ENCODE measurements at regions of chr13 and their contacts with region 1.

Region 1: DNA sequence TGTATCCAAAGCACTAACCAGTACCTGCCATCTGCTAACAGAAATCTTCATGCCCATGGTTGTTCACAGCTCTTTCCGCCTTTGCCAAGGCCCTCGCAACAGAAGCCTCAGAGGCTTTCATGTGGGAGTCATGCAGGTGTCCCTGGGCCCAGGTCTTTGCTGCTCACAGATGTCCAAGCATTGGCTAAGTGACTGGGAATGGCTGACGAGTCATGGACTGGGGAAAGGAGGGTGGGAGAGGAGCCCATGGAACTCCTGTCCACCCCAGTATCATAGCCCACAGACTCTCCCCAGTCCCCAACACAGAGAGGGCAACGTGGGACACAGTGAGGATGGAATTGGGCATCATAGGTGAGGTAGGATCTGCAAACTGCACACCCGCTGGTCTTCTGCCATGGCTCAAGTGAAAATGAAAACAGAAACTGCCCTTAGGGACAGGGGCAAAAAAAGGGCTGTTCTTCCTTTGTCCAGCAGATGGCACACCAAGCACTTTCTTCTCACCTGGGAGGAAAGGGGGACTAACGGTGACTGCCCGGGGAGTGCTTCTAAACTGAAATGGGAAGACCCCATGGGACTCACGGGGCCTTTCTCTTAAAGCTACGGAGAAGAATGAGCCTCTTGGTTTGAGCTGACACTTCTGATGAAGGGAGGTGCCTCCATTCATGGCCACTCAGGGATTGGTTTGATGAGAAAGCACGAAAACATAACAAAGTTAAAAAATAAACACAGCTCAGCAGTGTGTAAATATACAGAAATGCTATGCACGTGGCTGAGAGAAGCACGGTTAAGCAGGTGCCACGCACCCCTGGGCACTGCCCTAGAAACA is 11.1 kb upstream of the DHRS12 start:
- DNase-seq: no peak
- ATAC-seq: peak; percentile 80
- H3K4me3 ChIP-seq: peak overlapping the region; percentile 24; the same call in 1 of the 2 replicates
- H3K27ac ChIP-seq: peak overlapping the region; percentile 28
- H3K4me1 ChIP-seq: peaks cover 32% of the 10 kb centered on the region
- H3K27me3 ChIP-seq: no peaks in the 10 kb centered on the region
- CTCF ChIP-seq: peak; percentile 83 to 97 (median 90)
- EP300 ChIP-seq: no peak
- POLR2A ChIP-seq: no peak
- RAD21 ChIP-seq: peak; percentile 88

Region 2: DNA sequence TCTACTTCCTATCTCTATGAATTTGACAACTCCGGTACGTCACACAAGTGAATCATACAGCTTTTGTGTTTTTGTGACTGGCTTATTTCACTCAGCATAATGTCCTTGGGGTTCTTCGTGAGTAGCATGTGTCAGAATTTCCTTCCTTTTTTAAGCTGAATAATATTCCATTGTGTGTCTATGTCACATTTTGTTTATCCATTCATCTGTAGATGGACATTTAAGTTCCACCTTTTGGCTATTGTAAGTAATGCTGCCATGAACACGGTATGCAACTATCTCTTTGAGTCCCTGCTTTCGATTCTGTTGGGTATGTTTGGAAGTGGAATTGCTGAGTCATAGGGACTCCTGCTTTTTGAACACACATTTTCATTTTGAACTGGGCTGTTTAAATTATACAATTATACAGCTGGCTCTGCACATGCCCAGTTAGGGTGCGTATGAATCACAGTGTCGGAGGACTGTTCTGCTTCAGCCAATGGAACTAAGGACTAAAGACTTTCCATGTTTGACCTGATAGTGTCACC is 660.9 kb before region 1 on chr13:
- CTCF ChIA-PET with region 1: no interaction called
- POLR2A ChIA-PET with region 1: no interaction called
- RAD21 ChIA-PET with region 1: no interaction called
- SMC1A ChIA-PET with region 1: no interaction called
- in situ Hi-C with region 1: no loop called
- intact Hi-C with region 1: no loop called
- DNase-seq: no peak
- ATAC-seq: no peak
- H3K4me3 ChIP-seq: no peak overlapping the region
- H3K27ac ChIP-seq: no peak overlapping the region
- H3K4me1 ChIP-seq: no peaks in the 10 kb centered on the region
- H3K27me3 ChIP-seq: peaks cover 0 to 3% of the 10 kb centered on the region in 2 experiments; a peak in 1 of 4 replicates
- CTCF ChIP-seq: no peak
- EP300 ChIP-seq: no peak
- POLR2A ChIP-seq: no peak
- RAD21 ChIP-seq: no peak

Region 3: DNA sequence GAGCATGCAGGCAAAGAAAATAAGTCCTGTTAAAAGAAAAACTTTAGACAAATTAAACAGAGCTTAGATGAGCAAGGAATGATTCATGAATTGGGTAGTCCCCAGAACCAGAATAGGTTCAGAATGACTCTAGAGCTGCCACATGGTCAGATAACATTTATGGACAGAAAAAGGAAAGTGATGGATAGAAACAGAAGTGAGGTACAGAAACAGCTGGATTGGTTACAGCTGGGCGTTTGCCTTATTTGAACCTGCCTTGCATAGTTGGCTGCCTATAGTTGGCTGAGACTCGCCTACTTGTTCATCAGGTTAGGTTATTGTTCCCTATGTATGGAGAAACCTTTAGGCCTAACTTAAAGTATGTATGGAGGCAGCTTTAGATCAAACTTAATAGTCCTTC is 195.4 kb before region 1 on chr13:
- CTCF ChIA-PET with region 1: no interaction called
- POLR2A ChIA-PET with region 1: no interaction called
- RAD21 ChIA-PET with region 1: no interaction called
- SMC1A ChIA-PET with region 1: no interaction called
- in situ Hi-C with region 1: no loop called
- intact Hi-C with region 1: no loop called
- DNase-seq: no peak
- ATAC-seq: peak; percentile 68
- H3K4me3 ChIP-seq: no peak overlapping the region
- H3K27ac ChIP-seq: no peak overlapping the region
- H3K4me1 ChIP-seq: peaks cover 9% of the 10 kb centered on the region; the same call in 1 of the 2 replicates
- H3K27me3 ChIP-seq: no peaks in the 10 kb centered on the region
- CTCF ChIP-seq: no peak
- EP300 ChIP-seq: no peak
- POLR2A ChIP-seq: no peak
- RAD21 ChIP-seq: no peak

Region 4: DNA sequence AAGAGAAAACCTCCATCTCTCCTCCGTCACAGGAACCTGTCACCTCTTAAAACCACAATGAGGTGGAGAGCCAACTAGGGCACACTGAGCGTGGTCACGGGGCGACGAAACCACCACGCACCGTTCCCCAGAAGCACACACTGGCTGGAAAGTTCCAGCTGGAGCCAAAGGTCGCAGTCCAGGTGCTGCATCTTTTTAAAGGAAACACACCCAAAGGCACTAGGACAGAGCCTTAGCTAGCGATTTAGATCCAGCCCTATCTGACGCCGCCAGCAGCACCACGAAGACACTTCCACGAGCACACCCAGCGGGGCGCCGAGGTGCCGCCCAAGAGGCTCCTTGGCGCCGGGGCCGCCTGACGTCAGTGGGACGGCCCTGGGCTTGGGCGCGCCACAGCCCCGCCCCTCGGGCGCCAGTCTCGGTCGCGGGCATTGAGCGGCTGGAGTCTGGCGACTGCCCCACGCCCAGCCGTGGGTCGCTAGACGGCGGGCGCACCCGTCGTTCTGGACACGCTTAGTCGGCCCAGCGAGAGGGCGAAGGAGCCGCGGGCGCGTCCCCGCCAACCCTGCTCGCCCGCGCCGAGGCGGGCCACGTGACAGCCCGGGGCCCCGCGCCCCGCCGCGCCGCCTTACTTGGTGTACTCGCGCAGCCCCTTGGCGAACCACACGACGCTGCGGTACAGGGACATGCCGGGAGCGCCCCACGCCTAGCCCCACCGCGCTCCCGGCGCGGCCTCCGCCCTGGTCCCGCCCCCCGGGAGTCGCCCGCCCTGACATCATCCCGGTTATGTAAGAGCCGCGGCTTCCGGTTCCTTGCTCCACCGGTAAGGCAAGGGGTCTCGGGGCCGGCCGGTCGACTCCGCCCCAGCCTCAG is 11.4 kb before region 1 on chr13 and contains the start of gene DHRS12:
- CTCF ChIA-PET with region 1: interaction called, 47 read pairs
- POLR2A ChIA-PET with region 1: interaction called, 3 read pairs
- RAD21 ChIA-PET with region 1: interaction called, 59 read pairs
- SMC1A ChIA-PET with region 1: interaction called, 26 read pairs
- in situ Hi-C with region 1: no loop called
- intact Hi-C with region 1: no loop called
- DNase-seq: peak; percentile 58
- ATAC-seq: peak; percentile 86
- H3K4me3 ChIP-seq: peak within 1 kb of the TSS; percentile 82
- H3K27ac ChIP-seq: peak within 1 kb of the TSS; percentile 91
- H3K4me1 ChIP-seq: peaks cover 17% of the 10 kb centered on the region
- H3K27me3 ChIP-seq: no peaks in the 10 kb centered on the region
- CTCF ChIP-seq: no peak; a peak in 1 of 6 replicates
- EP300 ChIP-seq: peak in 1 of 2 experiments; percentile 30; a peak in 1 of 4 replicates
- POLR2A ChIP-seq: peak; percentile 95
- RAD21 ChIP-seq: 0 out of 2 replicates have a peak, but pooled peaks have one; percentile 14
- polyA plus RNA-seq, gene DHRS12: 2.9 to 4.0 TPM

Region 5: GRCh38 chr13:51832471-51833152 is 17.6 kb after region 1 on chr13:
- CTCF ChIA-PET with region 1: interaction called, 180 read pairs
- POLR2A ChIA-PET with region 1: interaction called, 5 read pairs
- RAD21 ChIA-PET with region 1: interaction called, 75 read pairs
- SMC1A ChIA-PET with region 1: interaction called, 85 read pairs
- in situ Hi-C with region 1: no loop called
- intact Hi-C with region 1: loop called (anchors 1 kb)
- DNase-seq: no peak
- ATAC-seq: peak; percentile 97
- H3K4me3 ChIP-seq: no peak overlapping the region
- H3K27ac ChIP-seq: no peak overlapping the region
- H3K4me1 ChIP-seq: no peaks in the 10 kb centered on the region
- H3K27me3 ChIP-seq: peaks cover 0 to 6% of the 10 kb centered on the region in 2 experiments; a peak in 3 of 4 replicates
- CTCF ChIP-seq: peak; percentile 44 to 75 (median 56)
- EP300 ChIP-seq: no peak
- POLR2A ChIP-seq: no peak
- RAD21 ChIP-seq: peak; percentile 65

Region 6: GRCh38 chr13:51844862-51845573 is 30.0 kb after region 1 on chr13 and contains the start of gene TMEM272:
- CTCF ChIA-PET with region 1: interaction called, 77 read pairs
- POLR2A ChIA-PET with region 1: interaction called, 3 read pairs
- RAD21 ChIA-PET with region 1: interaction called, 4 read pairs
- SMC1A ChIA-PET with region 1: interaction called, 30 read pairs
- in situ Hi-C with region 1: no loop called
- intact Hi-C with region 1: loop called (anchors 1 kb)
- DNase-seq: no peak
- ATAC-seq: peak; percentile 81
- H3K4me3 ChIP-seq: no peak within 1 kb of the TSS
- H3K27ac ChIP-seq: no peak within 1 kb of the TSS
- H3K4me1 ChIP-seq: no peaks in the 10 kb centered on the region
- H3K27me3 ChIP-seq: peaks cover 0 to 3% of the 10 kb centered on the region in 2 experiments; a peak in 2 of 4 replicates
- CTCF ChIP-seq: peak; percentile 63 to 93 (median 90)
- EP300 ChIP-seq: no peak
- POLR2A ChIP-seq: no peak
- RAD21 ChIP-seq: peak; percentile 47
- polyA plus RNA-seq, gene TMEM272: not detected

Region 7: DNA sequence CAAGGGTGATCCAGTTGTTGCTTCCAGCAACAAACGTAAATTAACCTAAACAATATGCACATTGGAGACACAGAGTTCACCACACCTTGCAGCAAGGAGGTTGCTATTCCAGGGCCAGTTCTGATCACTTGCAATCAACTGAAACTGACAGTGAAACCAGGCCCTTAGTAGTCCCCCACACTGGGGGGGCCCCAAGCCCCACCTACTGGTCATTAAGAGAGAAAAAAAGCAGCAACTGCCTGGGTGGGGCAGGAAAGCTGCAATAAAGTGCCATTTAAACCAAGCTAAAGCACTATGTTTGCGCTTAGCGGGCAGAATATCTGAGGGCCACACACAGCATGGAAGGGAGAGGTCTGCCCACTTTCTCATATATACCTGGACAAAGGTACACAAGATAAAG is 144.7 kb after region 1 on chr13:
- CTCF ChIA-PET with region 1: interaction called, 4 read pairs
- POLR2A ChIA-PET with region 1: no interaction called
- RAD21 ChIA-PET with region 1: interaction called, 4 read pairs
- SMC1A ChIA-PET with region 1: interaction called, 4 read pairs
- in situ Hi-C with region 1: no loop called
- intact Hi-C with region 1: loop called (anchors 5 kb)
- DNase-seq: no peak
- ATAC-seq: peak; percentile 65
- H3K4me3 ChIP-seq: no peak overlapping the region
- H3K27ac ChIP-seq: no peak overlapping the region
- H3K4me1 ChIP-seq: peaks cover 17% of the 10 kb centered on the region
- H3K27me3 ChIP-seq: no peaks in the 10 kb centered on the region; a peak in 1 of 4 replicates
- CTCF ChIP-seq: peak; percentile 18 to 25 (median 22); a peak in 3 of 6 replicates
- EP300 ChIP-seq: no peak
- POLR2A ChIP-seq: no peak
- RAD21 ChIP-seq: 0 out of 2 replicates have a peak, but pooled peaks have one; percentile 24

Region 8: DNA sequence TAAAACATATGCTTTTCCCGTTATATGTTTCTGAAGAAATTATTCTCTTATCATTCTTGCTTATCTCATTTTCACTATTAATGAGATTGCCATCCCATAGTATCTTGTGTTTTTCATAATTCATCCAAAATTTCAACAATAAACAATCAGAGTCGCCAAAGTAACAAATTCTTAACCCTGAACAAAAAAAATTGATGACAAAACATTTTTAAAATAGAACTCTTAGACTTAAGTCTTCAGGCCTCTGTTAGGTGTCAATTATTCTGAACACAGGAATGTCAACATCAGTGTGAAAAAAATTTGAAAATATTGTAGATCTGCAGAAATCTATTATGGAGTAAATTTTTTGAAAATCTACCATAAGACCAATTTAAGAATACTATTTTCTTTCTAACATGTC is 276.4 kb after region 1 on chr13:
- CTCF ChIA-PET with region 1: no interaction called
- POLR2A ChIA-PET with region 1: no interaction called
- RAD21 ChIA-PET with region 1: no interaction called
- SMC1A ChIA-PET with region 1: no interaction called
- in situ Hi-C with region 1: no loop called
- intact Hi-C with region 1: no loop called
- DNase-seq: no peak
- ATAC-seq: no peak
- H3K4me3 ChIP-seq: no peak overlapping the region
- H3K27ac ChIP-seq: no peak overlapping the region
- H3K4me1 ChIP-seq: no peaks in the 10 kb centered on the region
- H3K27me3 ChIP-seq: no peaks in the 10 kb centered on the region; a peak in 1 of 4 replicates
- CTCF ChIP-seq: no peak
- EP300 ChIP-seq: no peak
- POLR2A ChIP-seq: no peak
- RAD21 ChIP-seq: no peak

Region 9: GRCh38 chr13:52194184-52194868 is 379.3 kb after region 1 on chr13:
- CTCF ChIA-PET with region 1: no interaction called
- POLR2A ChIA-PET with region 1: interaction called, 3 read pairs
- RAD21 ChIA-PET with region 1: interaction called, 3 read pairs
- SMC1A ChIA-PET with region 1: no interaction called
- in situ Hi-C with region 1: no loop called
- intact Hi-C with region 1: loop called (anchors 5 kb)
- DNase-seq: peak; percentile 60
- ATAC-seq: peak; percentile 83
- H3K4me3 ChIP-seq: peak overlapping the region; percentile 94
- H3K27ac ChIP-seq: peak overlapping the region; percentile 54
- H3K4me1 ChIP-seq: no peaks in the 10 kb centered on the region
- H3K27me3 ChIP-seq: no peaks in the 10 kb centered on the region
- CTCF ChIP-seq: no peak
- EP300 ChIP-seq: no peak
- POLR2A ChIP-seq: peak; percentile 92
- RAD21 ChIP-seq: no peak

Measured in GM12878 (cell line).